Posterior cingulate gyrus (tissue), 11 donors: ENCODE measurements at regions of chr6 and their contacts with region 1.

Region 1: GRCh38 chr6:19210849-19211590 is 626.1 kb upstream of the ID4 start:
- DNase-seq: peak in 5 of 10 donors; percentile 8 to 75 (median 53)

Region 2: DNA sequence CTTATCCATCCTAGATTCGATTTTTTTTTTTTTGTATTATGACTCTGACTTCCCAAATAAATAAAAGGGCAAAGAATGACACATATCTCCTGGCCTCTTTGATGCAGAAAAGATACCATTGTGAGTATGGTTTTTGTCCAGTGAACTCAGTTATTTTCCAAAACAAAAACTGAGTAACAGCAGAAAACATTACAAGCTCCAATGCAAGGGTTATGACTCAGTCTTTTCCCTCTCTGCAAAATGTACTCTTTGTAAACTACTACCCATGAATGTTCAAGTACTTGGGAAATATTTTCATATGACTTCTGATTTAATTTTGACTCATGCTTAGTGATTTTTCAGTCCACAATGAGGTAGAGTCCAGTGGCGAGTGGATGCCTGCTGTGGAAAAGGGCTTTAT is 468.6 kb before region 1 on chr6:
- intact Hi-C with region 1: loop called (anchors 10 kb)
- DNase-seq: no peak

Region 3: GRCh38 chr6:19312241-19312978 is 101.4 kb after region 1 on chr6:
- intact Hi-C with region 1: no loop called
- DNase-seq: no peak